Activated B cell treated with CpG ODN at 0.5 μM for 24 hours (primary cell): ENCODE measurements at regions of chr5 and their contacts with region 1.

Region 1: DNA sequence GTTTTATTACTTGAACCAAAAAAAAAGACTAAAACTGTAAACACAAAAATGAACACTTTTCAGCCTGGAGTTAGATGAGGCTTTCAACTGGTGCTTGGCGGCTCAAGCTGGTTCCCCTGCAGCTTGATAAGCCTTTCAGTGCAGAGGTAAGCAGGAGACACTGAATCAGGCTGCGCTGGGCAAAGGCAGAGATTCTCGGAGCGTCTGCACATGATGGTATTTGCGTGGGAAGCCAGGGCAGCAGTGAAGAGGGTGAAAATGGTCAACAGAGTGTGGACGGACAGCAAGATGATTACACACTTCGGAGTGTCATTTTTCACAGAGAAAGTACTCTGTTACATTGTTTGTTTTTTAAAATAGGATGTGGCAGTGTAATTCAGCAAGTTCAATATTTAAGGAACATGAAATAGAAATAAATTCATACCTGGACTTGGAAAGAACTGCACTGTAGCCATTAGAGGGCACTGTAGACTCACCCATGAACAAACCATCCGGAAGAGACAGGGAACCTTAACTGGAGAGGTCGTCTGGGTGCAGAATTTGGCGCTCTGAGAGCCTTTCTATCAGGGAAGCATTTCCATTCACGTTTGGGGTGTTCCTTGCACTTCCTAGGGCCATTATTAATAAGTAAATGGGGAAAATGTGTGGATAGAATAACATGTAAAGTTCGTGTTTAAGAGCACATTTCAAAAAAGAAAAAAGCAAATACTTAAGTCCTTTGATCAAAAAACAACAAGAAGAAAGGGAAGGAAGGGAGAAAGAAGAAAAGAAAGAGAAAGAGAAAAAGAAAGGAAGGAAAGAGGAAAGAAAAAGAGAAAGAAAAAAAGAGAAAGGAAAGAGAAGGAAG is 69.8 kb downstream of the ICE1 start:
- DNase-seq: no peak
- ATAC-seq: no peak
- H3K4me3 Mint-ChIP-seq: peak overlapping the region; percentile 66
- H3K27ac Mint-ChIP-seq: no peak overlapping the region
- H3K4me1 Mint-ChIP-seq: peaks cover 23% of the 10 kb centered on the region
- H3K27me3 Mint-ChIP-seq: no peaks in the 10 kb centered on the region
- CTCF ChIP-seq: no peak

Region 2: DNA sequence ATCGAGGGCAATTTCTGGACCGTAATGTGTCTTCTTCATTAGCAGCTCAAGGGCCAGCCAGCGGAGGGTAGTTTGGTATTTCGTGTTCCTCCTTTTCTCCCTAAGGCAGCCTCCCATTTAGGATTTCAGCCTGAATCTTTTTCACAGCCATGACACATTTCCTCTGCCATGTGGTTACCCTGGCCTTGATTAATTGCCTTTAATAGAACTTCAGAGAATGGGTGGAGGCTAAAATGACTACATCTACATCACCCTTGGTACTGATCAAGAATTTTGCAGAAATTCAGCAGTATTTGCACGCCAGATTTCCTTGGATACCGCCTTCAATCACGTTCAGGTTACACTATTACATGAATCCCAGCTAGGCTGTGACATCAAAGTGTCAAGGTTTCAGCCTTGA is 294.2 kb before region 1 on chr5:
- CTCF ChIA-PET with region 1: no interaction called
- POLR2A ChIA-PET with region 1: no interaction called
- intact Hi-C with region 1: no loop called
- DNase-seq: no peak
- ATAC-seq: no peak
- H3K4me3 Mint-ChIP-seq: no peak overlapping the region
- H3K27ac Mint-ChIP-seq: no peak overlapping the region
- H3K4me1 Mint-ChIP-seq: no peaks in the 10 kb centered on the region
- H3K27me3 Mint-ChIP-seq: peaks cover 3% of the 10 kb centered on the region
- CTCF ChIP-seq: no peak

Region 3: GRCh38 chr5:5752844-5753243 is 260.5 kb after region 1 on chr5:
- CTCF ChIA-PET with region 1: no interaction called
- POLR2A ChIA-PET with region 1: no interaction called
- intact Hi-C with region 1: loop called (anchors 10 kb)
- DNase-seq: no peak
- ATAC-seq: peak; percentile 56
- H3K4me3 Mint-ChIP-seq: peak overlapping the region; percentile 42
- H3K27ac Mint-ChIP-seq: peak overlapping the region; percentile 88
- H3K4me1 Mint-ChIP-seq: peaks cover 80% of the 10 kb centered on the region
- H3K27me3 Mint-ChIP-seq: no peaks in the 10 kb centered on the region
- CTCF ChIP-seq: no peak

Region 4: GRCh38 chr5:6377905-6378765 is 885.8 kb after region 1 on chr5 and contains the start of gene MED10:
- CTCF ChIA-PET with region 1: no interaction called
- POLR2A ChIA-PET with region 1: no interaction called
- intact Hi-C with region 1: loop called (anchors 1 kb)
- DNase-seq: peak; percentile 91
- ATAC-seq: peak; percentile 98
- H3K4me3 Mint-ChIP-seq: peak within 1 kb of the TSS; percentile 95
- H3K27ac Mint-ChIP-seq: peak within 1 kb of the TSS; percentile 89
- H3K4me1 Mint-ChIP-seq: peaks cover 38% of the 10 kb centered on the region
- H3K27me3 Mint-ChIP-seq: peaks cover 2% of the 10 kb centered on the region
- CTCF ChIP-seq: no peak
- total RNA-seq, gene MED10: 45.0 and 47.7 TPM in 2 replicates

Region 5: GRCh38 chr5:6632917-6633468 is 1140.7 kb after region 1 on chr5 and contains the starts of genes NSUN2 and SRD5A1:
- CTCF ChIA-PET with region 1: interaction called, 3 read pairs
- POLR2A ChIA-PET with region 1: interaction called, 3 read pairs
- intact Hi-C with region 1: loop called (anchors 2 kb)
- DNase-seq: peak; percentile 97
- ATAC-seq: peak; percentile 88
- H3K4me3 Mint-ChIP-seq: peak within 1 kb of the TSS; percentile 92
- H3K27ac Mint-ChIP-seq: peak within 1 kb of the TSS; percentile 99
- H3K4me1 Mint-ChIP-seq: peaks cover 44% of the 10 kb centered on the region
- H3K27me3 Mint-ChIP-seq: no peaks in the 10 kb centered on the region
- CTCF ChIP-seq: no peak
- total RNA-seq, gene NSUN2: 86.4 and 93.3 TPM in 2 replicates
- total RNA-seq, gene SRD5A1: 11.5 and 14.8 TPM in 2 replicates

Region 6: DNA sequence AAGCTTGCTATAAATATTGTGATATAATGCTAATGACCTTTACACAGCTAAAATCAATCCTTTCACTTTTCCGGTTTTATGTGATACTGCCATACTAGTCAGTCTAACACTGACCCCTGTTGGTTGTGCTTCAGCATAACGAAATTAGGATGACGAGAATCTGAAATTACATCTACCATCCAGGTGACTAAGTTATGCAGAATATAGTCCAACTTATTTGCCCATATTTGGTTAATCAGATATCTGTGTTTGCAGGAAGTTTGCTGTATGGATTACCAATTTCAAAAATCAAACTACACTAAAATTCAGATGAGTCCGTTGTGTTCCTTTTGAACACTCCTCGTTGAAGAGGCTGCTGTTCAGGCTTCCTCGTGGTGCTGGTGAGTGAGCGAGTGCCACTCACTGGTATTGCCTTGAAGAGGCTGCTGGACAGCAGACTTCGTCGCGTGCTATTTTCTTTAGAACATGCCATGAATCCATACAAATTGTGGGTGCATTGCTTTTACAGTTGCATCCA is 1253.5 kb after region 1 on chr5:
- CTCF ChIA-PET with region 1: interaction called, 6 read pairs
- POLR2A ChIA-PET with region 1: no interaction called
- intact Hi-C with region 1: loop called (anchors 1 kb)
- DNase-seq: no peak
- ATAC-seq: peak; percentile 87
- H3K4me3 Mint-ChIP-seq: no peak overlapping the region
- H3K27ac Mint-ChIP-seq: peak overlapping the region; percentile 46
- H3K4me1 Mint-ChIP-seq: peaks cover 9% of the 10 kb centered on the region
- H3K27me3 Mint-ChIP-seq: no peaks in the 10 kb centered on the region
- CTCF ChIP-seq: peak; percentile 71